ENCODE measurements at regions of chr14 and their contacts with region 1.

Region 1: GRCh38 chr14:21024585-21025370 is at the start of gene NDRG2:
- DNase-seq: peak; percentile 87
- ATAC-seq: peak; percentile 92 to 95
- H3K4me3 ChIP-seq: peak within 1 kb of the TSS; percentile 90
- H3K27ac ChIP-seq: peak within 1 kb of the TSS; percentile 85
- H3K4me1 ChIP-seq: peaks cover 17% of the 10 kb centered on the region
- H3K27me3 ChIP-seq: no peaks in the 10 kb centered on the region
- CTCF ChIP-seq: no peak
- total RNA-seq, gene NDRG2: 92.7 TPM

Region 2: DNA sequence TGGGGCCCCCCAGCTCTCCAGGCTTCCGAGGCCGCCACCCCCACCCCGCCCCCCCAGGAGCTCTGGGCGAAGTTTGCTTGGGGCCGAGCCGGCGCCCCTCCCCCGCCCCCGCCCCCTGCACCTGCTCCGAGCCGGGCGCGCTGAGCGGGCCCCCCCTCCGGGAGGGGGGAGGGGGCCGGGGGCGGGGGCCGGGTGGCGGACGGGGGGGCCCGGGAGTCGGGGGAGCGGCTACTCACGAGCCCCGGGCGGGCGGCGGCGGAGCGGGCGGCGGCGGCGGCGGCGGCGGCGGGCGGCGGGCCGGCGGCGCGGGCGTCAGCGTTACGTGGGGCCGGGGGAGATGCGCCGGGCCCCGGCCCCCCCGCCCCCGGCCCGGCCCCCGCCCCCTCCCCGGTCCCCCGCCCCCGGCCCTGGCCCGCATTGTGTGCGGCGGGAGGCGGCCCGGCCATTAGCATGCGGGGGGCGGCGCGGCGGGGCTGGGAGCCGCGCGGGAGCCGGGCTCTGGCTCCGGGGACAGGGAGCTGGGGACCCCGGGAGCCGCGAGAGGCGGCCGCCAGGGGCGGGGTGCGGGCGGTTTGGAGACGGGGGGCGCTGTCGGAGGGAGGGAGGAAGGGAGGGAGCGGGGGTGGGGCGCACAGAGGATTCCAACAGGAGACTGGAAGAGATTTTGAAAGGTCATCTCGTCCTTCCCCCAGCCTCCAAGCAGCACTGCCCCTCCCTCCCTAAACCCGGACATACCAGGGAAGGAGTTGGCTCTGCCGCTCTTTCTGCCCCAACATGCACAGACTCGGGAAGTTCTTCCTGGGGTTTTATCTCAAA is 73.5 kb after region 1 on chr14 and contains the start of gene ZNF219:
- intact Hi-C with region 1: loop called (anchors 5 kb)
- DNase-seq: peak; percentile 65
- ATAC-seq: peak; percentile 46 to 56
- H3K4me3 ChIP-seq: peak within 1 kb of the TSS; percentile 62
- H3K27ac ChIP-seq: peak within 1 kb of the TSS; percentile 83
- H3K4me1 ChIP-seq: peaks cover 30% of the 10 kb centered on the region
- H3K27me3 ChIP-seq: no peaks in the 10 kb centered on the region
- CTCF ChIP-seq: no peak
- total RNA-seq, gene ZNF219: 46.1 TPM

Measured in lower lobe of right lung (tissue), 2 donors.